Activated CD4-positive, alpha-beta T cell treated with anti-CD3 and anti-CD28 coated beads, Interleukin-2, amount 10 ng/mL, durations not matched to agents 7 days and 5 days (primary cell): ENCODE measurements at regions of chr11 and their contacts with region 1.

Region 1: DNA sequence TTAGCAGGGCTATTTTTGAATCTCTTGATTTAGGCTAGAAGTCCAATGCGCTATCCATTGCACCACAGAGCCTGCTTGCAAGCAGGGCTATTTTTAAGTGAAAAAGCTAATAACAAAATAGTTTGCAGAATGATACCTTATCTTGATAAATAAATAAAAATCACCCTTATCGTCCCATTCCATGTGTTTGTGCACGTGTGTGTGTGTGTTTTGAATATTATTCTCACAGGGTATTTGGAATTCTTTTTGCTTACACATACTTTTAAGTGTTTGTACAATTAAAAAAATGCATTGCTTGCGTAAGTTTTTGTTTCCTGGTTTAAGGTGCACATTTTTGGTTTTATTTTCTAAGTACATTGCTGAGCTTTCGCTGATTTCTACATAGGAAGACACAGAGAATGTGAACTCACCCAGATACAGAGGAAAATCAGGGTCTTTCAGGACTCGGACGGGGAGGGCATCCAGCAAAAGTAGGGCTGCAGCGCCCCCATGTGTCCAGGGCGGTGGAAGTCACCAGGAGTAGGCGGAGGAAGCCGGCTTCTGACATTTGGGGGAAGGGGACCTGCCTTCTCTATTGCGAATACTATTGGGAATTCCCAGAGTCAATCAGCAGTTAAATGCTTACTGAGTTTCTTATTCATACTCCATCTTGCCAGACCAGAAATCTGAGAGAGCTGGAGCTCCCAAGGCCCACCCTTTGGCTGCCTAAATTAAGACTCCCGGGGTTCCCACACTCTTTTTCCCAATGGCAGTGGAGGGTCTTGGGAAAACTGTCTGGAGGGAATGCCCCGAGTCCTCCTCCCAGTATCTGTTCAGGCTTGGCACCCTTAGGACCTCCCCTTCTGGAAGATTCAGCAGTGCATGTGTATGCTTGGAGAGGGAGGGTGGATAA is 27.2 kb downstream of the SLC1A2 start:
- DNase-seq: peak; percentile 84
- H3K4me3 Mint-ChIP-seq: no peak overlapping the region
- H3K27ac Mint-ChIP-seq: no peak overlapping the region
- H3K4me1 Mint-ChIP-seq: peaks cover 18% of the 10 kb centered on the region
- H3K27me3 Mint-ChIP-seq: peaks cover 6% of the 10 kb centered on the region

Region 2: DNA sequence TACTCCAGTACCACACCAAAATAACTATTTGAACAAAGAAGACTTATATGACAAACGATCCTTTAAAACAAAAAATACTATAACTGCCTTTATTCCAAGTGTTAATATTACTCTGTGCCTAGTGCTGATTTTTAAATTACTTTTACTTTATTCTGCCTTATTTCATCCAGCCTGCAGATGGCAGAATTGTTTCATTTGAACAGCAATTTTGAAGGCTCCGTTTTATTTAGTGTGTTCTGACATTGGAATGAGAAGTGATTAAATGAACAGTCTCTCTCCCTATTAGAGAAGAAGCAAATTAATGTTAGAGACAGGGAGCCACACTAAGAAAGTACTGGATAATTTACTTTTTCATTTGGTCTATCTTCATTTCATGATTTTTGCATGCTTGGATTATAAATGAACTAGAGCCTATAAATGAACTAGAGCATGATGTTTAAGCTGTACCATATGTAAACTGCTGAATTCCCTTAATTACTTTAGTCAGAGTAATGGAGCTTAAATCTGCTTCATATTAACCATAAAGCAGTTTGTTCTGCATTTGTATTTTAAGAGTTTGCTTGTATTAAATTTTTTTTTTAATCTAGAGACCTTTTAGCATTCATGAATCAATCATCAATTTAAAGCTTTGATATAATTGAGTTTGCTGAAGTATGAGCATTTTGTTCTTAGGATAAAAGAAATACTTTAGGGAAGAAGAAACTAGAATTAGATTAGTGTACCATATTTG is 465.9 kb before region 1 on chr11:
- CTCF ChIA-PET with region 1: interaction called, 36 read pairs
- POLR2A ChIA-PET with region 1: no interaction called
- DNase-seq: peak; percentile 39
- H3K4me3 Mint-ChIP-seq: no peak overlapping the region
- H3K27ac Mint-ChIP-seq: no peak overlapping the region
- H3K4me1 Mint-ChIP-seq: peaks cover 13% of the 10 kb centered on the region
- H3K27me3 Mint-ChIP-seq: no peaks in the 10 kb centered on the region